Heart right ventricle (tissue), 16 donors: ENCODE measurements at regions of chr2 and their contacts with region 1.

Region 1: DNA sequence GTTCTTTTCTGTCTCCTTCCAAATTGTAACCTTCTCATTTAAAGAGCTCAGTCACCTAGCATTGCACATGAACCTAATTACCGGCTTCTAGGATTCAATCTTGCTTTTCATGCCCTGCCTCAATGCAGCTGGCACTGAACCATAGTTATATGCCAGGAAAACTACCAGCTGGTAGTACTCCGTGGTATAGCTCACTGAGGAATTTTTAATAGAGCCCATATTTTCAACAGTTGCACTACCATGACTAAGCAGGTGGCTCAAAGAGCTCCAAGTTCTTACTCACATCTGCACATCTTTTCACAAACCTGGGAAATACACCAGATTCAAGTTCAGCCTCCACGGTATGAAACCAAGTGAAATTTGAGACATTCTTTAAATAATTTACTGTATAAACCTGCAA is 363.5 kb downstream of the GRB14 start:
- DNase-seq: no peak
- ATAC-seq: no peak
- H3K4me3 ChIP-seq: no peak overlapping the region
- H3K27ac ChIP-seq: no peak overlapping the region
- H3K4me1 ChIP-seq: no peaks in the 10 kb centered on the region
- H3K27me3 ChIP-seq: no peaks in the 10 kb centered on the region
- CTCF ChIP-seq: no peak

Region 2: DNA sequence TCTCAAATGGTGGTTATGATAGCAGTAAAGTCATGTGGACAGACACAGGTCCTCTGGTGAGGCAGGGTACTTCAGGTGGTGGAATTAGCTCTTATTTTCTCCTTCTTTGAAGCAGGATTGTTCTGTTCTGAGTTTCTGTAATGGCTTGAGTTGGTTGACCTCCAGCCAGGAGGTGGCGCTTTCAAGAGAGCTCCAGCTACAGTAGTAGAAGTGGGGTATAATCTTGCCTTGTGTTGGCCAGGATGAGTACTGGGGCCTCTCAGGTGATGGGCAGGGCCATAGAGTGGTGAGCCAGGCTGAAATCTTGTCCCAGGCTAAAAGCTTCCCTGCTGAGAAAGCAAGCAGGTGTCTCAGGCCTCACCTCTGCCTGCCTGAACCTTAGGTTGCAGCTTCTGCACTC is 1159.3 kb after region 1 on chr2:
- intact Hi-C with region 1: loop called in 1 of 10 experiments (anchors 5 kb)
- DNase-seq: no peak
- ATAC-seq: no peak
- H3K4me3 ChIP-seq: no peak overlapping the region
- H3K27ac ChIP-seq: no peak overlapping the region
- H3K4me1 ChIP-seq: no peaks in the 10 kb centered on the region
- H3K27me3 ChIP-seq: no peaks in the 10 kb centered on the region
- CTCF ChIP-seq: no peak